CD8-positive, alpha-beta T cell (primary cell): ENCODE measurements at regions of chr2 and their contacts with region 1.

Region 1: DNA sequence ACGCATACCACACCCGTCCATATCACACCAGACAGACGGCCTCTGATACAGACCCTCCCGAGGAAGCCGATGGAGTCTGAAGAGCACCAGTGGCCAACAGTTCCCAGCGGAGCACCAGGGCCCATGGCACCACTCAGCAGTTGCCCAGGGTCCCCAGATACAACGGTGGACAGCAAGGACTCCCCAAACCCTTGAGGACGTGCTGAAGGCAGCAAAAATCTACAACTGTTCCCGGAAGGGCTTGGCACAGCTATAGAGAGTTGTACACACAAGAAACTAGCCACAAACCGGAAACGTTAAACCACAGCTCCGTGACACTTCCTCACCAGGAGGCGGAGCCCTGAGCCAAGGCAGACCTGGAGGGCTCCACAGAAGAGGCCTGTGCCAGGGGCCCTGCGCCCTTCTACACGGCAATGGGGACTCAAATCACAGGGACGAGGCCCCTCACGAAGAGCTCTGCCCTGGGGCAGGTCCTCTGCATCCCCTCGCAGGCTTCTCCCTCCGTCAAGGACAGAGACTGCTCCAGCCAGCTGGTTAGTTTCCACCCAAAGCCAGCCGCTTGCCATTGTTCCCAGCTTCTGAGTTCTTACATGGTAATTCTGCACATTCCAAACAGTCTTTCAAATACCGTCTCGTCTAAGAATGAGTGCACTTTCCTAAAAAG is 133.4 kb downstream of the HDAC4 start:
- DNase-seq: peak; percentile 73 to 98 (median 93)
- ATAC-seq: peak; percentile 70
- H3K4me3 ChIP-seq: peak overlapping the region; percentile 62 to 66
- H3K4me3 Mint-ChIP-seq: peak overlapping the region; percentile 90
- H3K27ac ChIP-seq: peak overlapping the region; percentile 75 to 86
- H3K27ac Mint-ChIP-seq: peak overlapping the region; percentile 95
- H3K4me1 ChIP-seq: peaks cover 66% of the 10 kb centered on the region
- H3K4me1 Mint-ChIP-seq: peaks cover 71% of the 10 kb centered on the region
- H3K27me3 ChIP-seq: no peaks in the 10 kb centered on the region
- H3K27me3 Mint-ChIP-seq: no peaks in the 10 kb centered on the region
- CTCF ChIP-seq: peak; percentile 64

Region 2: GRCh38 chr2:239035361-239036078 is 231.9 kb before region 1 on chr2:
- CTCF ChIA-PET with region 1: no interaction called
- POLR2A ChIA-PET with region 1: no interaction called
- intact Hi-C with region 1: loop called in 1 of 2 experiments (anchors 5 kb)
- DNase-seq: peak; percentile 43 to 79 (median 67)
- ATAC-seq: peak; percentile 91
- H3K4me3 ChIP-seq: no peak overlapping the region
- H3K4me3 Mint-ChIP-seq: no peak overlapping the region
- H3K27ac ChIP-seq: no peak overlapping the region
- H3K27ac Mint-ChIP-seq: no peak overlapping the region
- H3K4me1 ChIP-seq: no peaks in the 10 kb centered on the region
- H3K4me1 Mint-ChIP-seq: no peaks in the 10 kb centered on the region
- H3K27me3 ChIP-seq: peaks cover 0 to 6% of the 10 kb centered on the region in 2 experiments
- H3K27me3 Mint-ChIP-seq: peaks cover 7% of the 10 kb centered on the region
- CTCF ChIP-seq: peak; percentile 85

Region 3: GRCh38 chr2:239288951-239289511 is 21.6 kb after region 1 on chr2:
- CTCF ChIA-PET with region 1: interaction called, 26 read pairs
- POLR2A ChIA-PET with region 1: interaction called, 13 read pairs
- intact Hi-C with region 1: loop called (anchors 1 kb)
- DNase-seq: peak in 5 of 9 experiments; percentile 39 to 86 (median 57)
- ATAC-seq: peak; percentile 69
- H3K4me3 ChIP-seq: peak overlapping the region; percentile 32 to 42
- H3K4me3 Mint-ChIP-seq: peak overlapping the region; percentile 74
- H3K27ac ChIP-seq: peak overlapping the region; percentile 80 to 87
- H3K27ac Mint-ChIP-seq: peak overlapping the region; percentile 98
- H3K4me1 ChIP-seq: peaks cover 76% of the 10 kb centered on the region
- H3K4me1 Mint-ChIP-seq: peaks cover 72% of the 10 kb centered on the region
- H3K27me3 ChIP-seq: no peaks in the 10 kb centered on the region
- H3K27me3 Mint-ChIP-seq: no peaks in the 10 kb centered on the region
- CTCF ChIP-seq: no peak

Region 4: DNA sequence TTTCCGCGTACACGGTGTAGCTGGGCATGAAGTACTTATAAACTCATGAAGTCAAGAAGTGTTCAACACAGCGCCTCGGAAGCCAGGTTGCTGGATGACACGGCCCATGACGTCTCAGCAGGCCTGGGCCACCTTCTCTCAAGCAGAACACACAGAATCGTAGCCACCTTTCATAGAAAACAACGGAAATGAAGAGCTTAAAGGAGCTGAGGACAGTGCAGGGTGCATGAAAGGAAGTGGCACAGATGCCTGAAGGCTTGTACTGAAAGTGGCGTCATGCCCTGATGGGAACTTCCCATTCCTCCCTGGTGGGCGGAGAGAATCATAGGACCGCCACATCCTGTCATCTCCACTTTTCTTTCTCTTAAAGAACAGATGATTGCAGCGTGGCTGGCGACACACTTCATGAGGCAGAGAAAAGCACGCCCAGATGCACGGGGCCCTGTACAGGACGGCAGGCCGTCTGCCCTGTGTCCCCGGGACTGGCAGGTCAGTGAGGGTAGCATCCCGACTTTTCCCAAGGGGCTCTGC is 102.3 kb after region 1 on chr2:
- CTCF ChIA-PET with region 1: interaction called, 6 read pairs
- POLR2A ChIA-PET with region 1: interaction called, 10 read pairs
- intact Hi-C with region 1: no loop called
- DNase-seq: peak; percentile 34 to 93 (median 67)
- ATAC-seq: peak; percentile 94
- H3K4me3 ChIP-seq: peak overlapping the region; percentile 15 to 24
- H3K4me3 Mint-ChIP-seq: peak overlapping the region; percentile 63
- H3K27ac ChIP-seq: peak overlapping the region; percentile 71 to 84
- H3K27ac Mint-ChIP-seq: no peak overlapping the region
- H3K4me1 ChIP-seq: peaks cover 33% of the 10 kb centered on the region
- H3K4me1 Mint-ChIP-seq: peaks cover 20% of the 10 kb centered on the region
- H3K27me3 ChIP-seq: no peaks in the 10 kb centered on the region
- H3K27me3 Mint-ChIP-seq: no peaks in the 10 kb centered on the region
- CTCF ChIP-seq: no peak

Region 5: GRCh38 chr2:239401067-239401880 is 133.9 kb after region 1 on chr2:
- CTCF ChIA-PET with region 1: interaction called, 35 read pairs
- POLR2A ChIA-PET with region 1: interaction called, 13 read pairs
- intact Hi-C with region 1: loop called (anchors 1 kb)
- DNase-seq: peak; percentile 99 to 100 (median 99)
- ATAC-seq: peak; percentile 88
- H3K4me3 ChIP-seq: peak overlapping the region; percentile 95 to 96
- H3K4me3 Mint-ChIP-seq: peak overlapping the region; percentile 93
- H3K27ac ChIP-seq: peak overlapping the region; percentile 99 to 100
- H3K27ac Mint-ChIP-seq: peak overlapping the region; percentile 98
- H3K4me1 ChIP-seq: peaks cover 18% of the 10 kb centered on the region
- H3K4me1 Mint-ChIP-seq: peaks cover 43% of the 10 kb centered on the region
- H3K27me3 ChIP-seq: no peaks in the 10 kb centered on the region
- H3K27me3 Mint-ChIP-seq: no peaks in the 10 kb centered on the region
- CTCF ChIP-seq: no peak

Region 6: DNA sequence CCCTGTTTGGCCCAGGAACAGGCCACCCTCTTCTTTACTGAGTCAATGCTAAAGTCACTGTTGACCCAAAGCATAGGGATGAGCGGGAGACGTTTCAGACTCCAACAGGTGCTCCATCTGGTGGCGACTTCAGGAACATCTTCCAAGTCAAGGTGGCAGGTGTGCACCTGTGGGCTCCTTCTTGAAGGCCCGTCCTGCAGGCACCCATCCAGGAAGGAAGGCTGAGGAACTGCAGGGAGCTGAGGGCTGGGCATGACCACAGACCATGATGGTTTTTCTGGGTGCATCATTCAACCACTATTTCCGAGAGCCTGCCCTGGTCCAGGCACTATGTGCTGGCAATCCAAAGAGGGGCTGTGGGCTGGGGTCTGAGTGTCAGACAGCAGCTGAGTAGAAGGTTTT is 614.9 kb after region 1 on chr2:
- CTCF ChIA-PET with region 1: interaction called, 6 read pairs
- POLR2A ChIA-PET with region 1: interaction called, 4 read pairs
- intact Hi-C with region 1: loop called (anchors 1 to 2 kb)
- DNase-seq: peak; percentile 33 to 70 (median 53)
- ATAC-seq: no peak
- H3K4me3 ChIP-seq: no peak overlapping the region
- H3K4me3 Mint-ChIP-seq: no peak overlapping the region
- H3K27ac ChIP-seq: no peak overlapping the region
- H3K27ac Mint-ChIP-seq: no peak overlapping the region
- H3K4me1 ChIP-seq: no peaks in the 10 kb centered on the region
- H3K4me1 Mint-ChIP-seq: peaks cover 3% of the 10 kb centered on the region
- H3K27me3 ChIP-seq: no peaks in the 10 kb centered on the region
- H3K27me3 Mint-ChIP-seq: peaks cover 12% of the 10 kb centered on the region
- CTCF ChIP-seq: peak; percentile 55

Region 7: GRCh38 chr2:240143801-240144648 is 876.6 kb after region 1 on chr2:
- CTCF ChIA-PET with region 1: no interaction called
- POLR2A ChIA-PET with region 1: no interaction called
- intact Hi-C with region 1: loop called in 1 of 2 experiments (anchors 5 kb)
- DNase-seq: peak; percentile 72 to 91 (median 82)
- ATAC-seq: peak; percentile 98
- H3K4me3 ChIP-seq: no peak overlapping the region
- H3K4me3 Mint-ChIP-seq: no peak overlapping the region
- H3K27ac ChIP-seq: no peak overlapping the region
- H3K27ac Mint-ChIP-seq: no peak overlapping the region
- H3K4me1 ChIP-seq: no peaks in the 10 kb centered on the region
- H3K4me1 Mint-ChIP-seq: peaks cover 3% of the 10 kb centered on the region
- H3K27me3 ChIP-seq: peaks cover 0 to 4% of the 10 kb centered on the region in 2 experiments
- H3K27me3 Mint-ChIP-seq: peaks cover 7% of the 10 kb centered on the region
- CTCF ChIP-seq: peak; percentile 87